Activated CD4-positive, alpha-beta T cell treated with anti-CD3 and anti-CD28 coated beads for 36 hours (primary cell): ENCODE measurements at regions of chr15 and their contacts with region 1.

Region 1: DNA sequence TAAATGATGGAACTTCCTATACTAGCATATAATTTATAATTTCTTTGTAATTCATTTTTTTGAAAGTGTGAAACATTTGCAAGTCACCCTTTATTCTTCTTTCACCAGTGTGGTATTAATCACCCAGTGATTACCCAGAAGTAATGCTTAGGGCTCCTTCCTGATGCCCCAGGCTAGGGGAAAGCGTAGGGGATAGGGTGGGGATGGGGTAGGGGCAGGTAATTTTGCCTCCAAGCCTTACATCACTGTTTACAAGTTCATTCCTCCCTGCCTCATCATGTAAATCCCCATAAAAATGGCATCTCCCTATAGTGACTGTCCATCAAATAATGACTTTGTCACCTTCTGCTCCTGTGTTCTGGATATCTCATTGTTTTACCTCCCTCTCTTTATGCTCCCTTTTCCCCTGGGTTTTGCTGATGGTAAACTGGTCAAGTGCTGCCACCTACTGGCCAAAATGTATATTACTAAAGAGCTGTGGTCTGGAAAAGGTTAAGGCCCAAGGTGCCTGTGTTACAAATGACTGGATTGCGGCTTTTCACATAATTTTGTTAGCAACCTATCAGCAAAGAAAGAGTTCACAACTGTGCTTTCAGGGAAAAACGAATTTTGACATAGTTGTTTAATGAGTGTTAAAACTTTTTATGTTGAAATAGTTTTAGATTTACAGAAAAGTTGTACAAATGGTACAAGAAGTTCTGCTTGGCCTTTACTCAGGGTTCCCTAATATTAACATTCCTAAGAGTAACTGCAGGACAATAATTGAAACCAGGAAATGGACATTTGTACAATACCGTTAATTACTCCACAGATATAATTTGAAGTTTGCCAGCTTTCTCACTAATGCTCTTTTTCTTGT is 54.7 kb downstream of the ONECUT1 start:
- DNase-seq: peak; percentile 77
- ATAC-seq: peak; percentile 91
- H3K4me3 Mint-ChIP-seq: no peak overlapping the region
- H3K27ac Mint-ChIP-seq: no peak overlapping the region
- H3K4me1 Mint-ChIP-seq: peaks cover 5% of the 10 kb centered on the region
- H3K27me3 Mint-ChIP-seq: no peaks in the 10 kb centered on the region

Region 2: DNA sequence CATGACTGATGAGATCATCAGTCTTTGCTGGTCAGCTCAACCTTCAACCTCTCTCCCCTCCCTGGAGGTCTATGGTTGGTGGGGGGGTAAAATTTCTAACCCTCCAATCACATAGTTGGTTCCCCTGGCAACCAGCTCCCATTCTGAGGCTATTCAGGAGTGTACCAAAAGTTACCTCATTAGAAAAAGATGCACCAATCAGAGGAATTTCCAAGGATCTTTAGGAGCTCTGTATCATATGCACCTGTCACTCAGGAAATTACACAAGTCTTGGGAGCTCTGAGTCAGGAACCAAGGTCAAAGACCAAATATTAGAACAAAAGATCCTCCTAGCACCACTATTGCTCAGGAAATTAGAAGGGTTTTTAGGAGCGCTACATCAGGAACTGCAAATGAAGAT is 742.5 kb before region 1 on chr15:
- CTCF ChIA-PET with region 1: no interaction called
- POLR2A ChIA-PET with region 1: no interaction called
- intact Hi-C with region 1: no loop called
- DNase-seq: no peak
- ATAC-seq: no peak
- H3K4me3 Mint-ChIP-seq: no peak overlapping the region
- H3K27ac Mint-ChIP-seq: no peak overlapping the region
- H3K4me1 Mint-ChIP-seq: no peaks in the 10 kb centered on the region
- H3K27me3 Mint-ChIP-seq: no peaks in the 10 kb centered on the region

Region 3: GRCh38 chr15:52331490-52332240 is 403.8 kb before region 1 on chr15:
- CTCF ChIA-PET with region 1: interaction called, 20 read pairs
- POLR2A ChIA-PET with region 1: no interaction called
- intact Hi-C with region 1: loop called (anchors 1 kb)
- DNase-seq: peak; percentile 66
- ATAC-seq: peak; percentile 99
- H3K4me3 Mint-ChIP-seq: no peak overlapping the region
- H3K27ac Mint-ChIP-seq: peak overlapping the region; percentile 28
- H3K4me1 Mint-ChIP-seq: peaks cover 12% of the 10 kb centered on the region
- H3K27me3 Mint-ChIP-seq: no peaks in the 10 kb centered on the region

Region 4: GRCh38 chr15:52568601-52569256 is 166.7 kb before region 1 on chr15 and contains the start of gene ARPP19:
- CTCF ChIA-PET with region 1: no interaction called
- POLR2A ChIA-PET with region 1: no interaction called
- intact Hi-C with region 1: loop called (anchors 2 to 5 kb)
- DNase-seq: peak; percentile 90
- ATAC-seq: peak; percentile 83
- H3K4me3 Mint-ChIP-seq: peak within 1 kb of the TSS; percentile 96
- H3K27ac Mint-ChIP-seq: peak within 1 kb of the TSS; percentile 97
- H3K4me1 Mint-ChIP-seq: peaks cover 27% of the 10 kb centered on the region
- H3K27me3 Mint-ChIP-seq: no peaks in the 10 kb centered on the region
- total RNA-seq, gene ARPP19: 141 to 185 TPM